ENCODE measurements at regions of chr10 and their contacts with region 1.

Region 1: GRCh38 chr10:124092860-124093773 is at the start of gene CHST15:
- DNase-seq: peak; percentile 82
- ATAC-seq: peak; percentile 39
- H3K4me3 ChIP-seq: peak within 1 kb of the TSS; percentile 58 to 85 (median 80)
- H3K4me3 Mint-ChIP-seq: peak within 1 kb of the TSS; percentile 98
- H3K27ac ChIP-seq: peak within 1 kb of the TSS; percentile 71 to 97
- H3K27ac Mint-ChIP-seq: peak within 1 kb of the TSS; percentile 90
- H3K4me1 ChIP-seq: peaks cover 29 to 33% of the 10 kb centered on the region in 2 donors
- H3K4me1 Mint-ChIP-seq: peaks cover 57% of the 10 kb centered on the region
- H3K27me3 ChIP-seq: no peaks in the 10 kb centered on the region
- H3K27me3 Mint-ChIP-seq: no peaks in the 10 kb centered on the region
- CTCF ChIP-seq: no peak
- total RNA-seq, gene CHST15: 72.0 and 75.4 TPM in 2 replicates

Region 2: GRCh38 chr10:124035928-124036558 is 57.1 kb before region 1 on chr10:
- CTCF ChIA-PET with region 1: interaction called, 22 read pairs
- POLR2A ChIA-PET with region 1: interaction called, 40 read pairs
- intact Hi-C with region 1: loop called (anchors 1 kb)
- DNase-seq: peak; percentile 90
- ATAC-seq: peak; percentile 91
- H3K4me3 ChIP-seq: peak overlapping the region in 4 of 5 experiments; percentile 30 to 47 (median 36)
- H3K4me3 Mint-ChIP-seq: peak overlapping the region; percentile 85
- H3K27ac ChIP-seq: peak overlapping the region; percentile 79 to 85
- H3K27ac Mint-ChIP-seq: peak overlapping the region; percentile 98
- H3K4me1 ChIP-seq: peaks cover 19 to 41% of the 10 kb centered on the region in 2 donors
- H3K4me1 Mint-ChIP-seq: peaks cover 26% of the 10 kb centered on the region
- H3K27me3 ChIP-seq: no peaks in the 10 kb centered on the region
- H3K27me3 Mint-ChIP-seq: no peaks in the 10 kb centered on the region
- CTCF ChIP-seq: no peak

Region 3: GRCh38 chr10:124074501-124075109 is 18.5 kb before region 1 on chr10:
- CTCF ChIA-PET with region 1: interaction called, 4 read pairs
- POLR2A ChIA-PET with region 1: interaction called, 19 read pairs
- intact Hi-C with region 1: loop called (anchors 2 kb)
- DNase-seq: peak; percentile 59
- ATAC-seq: peak; percentile 60
- H3K4me3 ChIP-seq: peak overlapping the region in 2 of 5 experiments; percentile 8 to 41
- H3K4me3 Mint-ChIP-seq: peak overlapping the region; percentile 66
- H3K27ac ChIP-seq: peak overlapping the region; percentile 3 to 45
- H3K27ac Mint-ChIP-seq: peak overlapping the region; percentile 78
- H3K4me1 ChIP-seq: peaks cover 75 to 87% of the 10 kb centered on the region in 2 donors
- H3K4me1 Mint-ChIP-seq: peaks cover 82% of the 10 kb centered on the region
- H3K27me3 ChIP-seq: no peaks in the 10 kb centered on the region
- H3K27me3 Mint-ChIP-seq: no peaks in the 10 kb centered on the region
- CTCF ChIP-seq: no peak

Region 4: DNA sequence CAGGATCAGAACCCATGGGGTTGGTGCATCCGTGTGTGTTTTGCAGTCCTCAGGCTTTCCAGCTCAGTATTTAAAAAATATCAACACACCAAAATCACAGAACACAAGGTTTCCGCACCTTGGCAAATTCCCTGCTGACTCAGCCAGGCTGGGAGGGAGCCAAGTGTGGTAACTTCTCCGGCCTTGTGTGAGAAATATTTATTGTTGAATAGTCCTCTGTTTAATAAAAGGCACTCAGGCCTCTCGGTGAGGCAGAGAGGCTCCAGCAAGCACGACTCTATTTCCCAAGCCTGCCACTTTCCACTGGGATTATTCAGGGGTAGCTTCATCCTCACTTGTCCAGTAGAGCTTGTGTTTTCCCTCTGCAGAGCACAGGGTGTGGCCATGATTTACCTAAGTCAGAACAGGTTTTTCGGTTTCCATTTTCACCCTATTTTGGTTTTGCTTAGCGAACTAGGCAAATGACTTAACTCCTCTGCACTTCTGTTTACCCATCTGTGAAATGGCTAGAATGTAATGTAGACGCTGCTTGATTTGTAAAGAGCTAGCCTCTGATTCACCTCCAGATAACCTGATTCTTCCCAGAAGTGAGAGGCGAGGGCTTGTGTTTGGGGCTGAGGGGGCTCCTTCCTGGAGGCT is 13.2 kb after region 1 on chr10:
- CTCF ChIA-PET with region 1: interaction called, 14 read pairs
- POLR2A ChIA-PET with region 1: interaction called, 15 read pairs
- intact Hi-C with region 1: loop called (anchors 2 kb)
- DNase-seq: peak; percentile 67
- ATAC-seq: peak; percentile 83
- H3K4me3 ChIP-seq: peak overlapping the region in 3 of 5 experiments; percentile 2 to 56 (median 21)
- H3K4me3 Mint-ChIP-seq: peak overlapping the region; percentile 78
- H3K27ac ChIP-seq: peak overlapping the region; percentile 45 to 54
- H3K27ac Mint-ChIP-seq: peak overlapping the region; percentile 92
- H3K4me1 ChIP-seq: peaks cover 70 to 81% of the 10 kb centered on the region in 2 donors
- H3K4me1 Mint-ChIP-seq: peaks cover 77% of the 10 kb centered on the region
- H3K27me3 ChIP-seq: peaks cover 0 to 2% (median 0%) of the 10 kb centered on the region in 4 experiments
- H3K27me3 Mint-ChIP-seq: no peaks in the 10 kb centered on the region
- CTCF ChIP-seq: no peak

Region 5: GRCh38 chr10:124142960-124143359 is 49.8 kb after region 1 on chr10:
- CTCF ChIA-PET with region 1: no interaction called
- POLR2A ChIA-PET with region 1: interaction called, 3 read pairs
- intact Hi-C with region 1: loop called (anchors 5 kb)
- DNase-seq: peak; percentile 50
- ATAC-seq: peak; percentile 42
- H3K4me3 ChIP-seq: no peak overlapping the region
- H3K4me3 Mint-ChIP-seq: no peak overlapping the region
- H3K27ac ChIP-seq: no peak overlapping the region
- H3K27ac Mint-ChIP-seq: no peak overlapping the region
- H3K4me1 ChIP-seq: peaks cover 32 to 39% of the 10 kb centered on the region in 2 donors
- H3K4me1 Mint-ChIP-seq: no peaks in the 10 kb centered on the region
- H3K27me3 ChIP-seq: no peaks in the 10 kb centered on the region
- H3K27me3 Mint-ChIP-seq: no peaks in the 10 kb centered on the region
- CTCF ChIP-seq: no peak

Region 6: GRCh38 chr10:124221356-124222317 is 128.5 kb after region 1 on chr10:
- CTCF ChIA-PET with region 1: interaction called, 17 read pairs
- POLR2A ChIA-PET with region 1: interaction called, 8 read pairs
- intact Hi-C with region 1: loop called (anchors 1 kb)
- DNase-seq: peak; percentile 32
- ATAC-seq: peak; percentile 22
- H3K4me3 ChIP-seq: peak overlapping the region in 3 of 5 experiments; percentile 25 to 60 (median 35)
- H3K4me3 Mint-ChIP-seq: peak overlapping the region; percentile 79
- H3K27ac ChIP-seq: no peak overlapping the region
- H3K27ac Mint-ChIP-seq: peak overlapping the region; percentile 56
- H3K4me1 ChIP-seq: peaks cover 28 to 30% of the 10 kb centered on the region in 2 donors
- H3K4me1 Mint-ChIP-seq: peaks cover 33% of the 10 kb centered on the region
- H3K27me3 ChIP-seq: no peaks in the 10 kb centered on the region
- H3K27me3 Mint-ChIP-seq: no peaks in the 10 kb centered on the region
- CTCF ChIP-seq: no peak

Measured in B cell (primary cell).